Activated B cell treated with CpG ODN at 0.5 μM for 24 hours (primary cell): ENCODE measurements at regions of chr2 and their contacts with region 1.

Region 1: GRCh38 chr2:230160112-230160660 is 59.6 kb downstream of the SP110 start:
- DNase-seq: peak; percentile 34
- ATAC-seq: peak; percentile 42
- H3K4me3 Mint-ChIP-seq: no peak overlapping the region
- H3K27ac Mint-ChIP-seq: no peak overlapping the region
- H3K4me1 Mint-ChIP-seq: peaks cover 24% of the 10 kb centered on the region
- H3K27me3 Mint-ChIP-seq: no peaks in the 10 kb centered on the region
- CTCF ChIP-seq: no peak

Region 2: GRCh38 chr2:229780856-229781773 is 379.1 kb before region 1 on chr2:
- CTCF ChIA-PET with region 1: interaction called, 3 read pairs
- POLR2A ChIA-PET with region 1: no interaction called
- intact Hi-C with region 1: loop called (anchors 2 kb)
- DNase-seq: no peak
- ATAC-seq: peak; percentile 65
- H3K4me3 Mint-ChIP-seq: no peak overlapping the region
- H3K27ac Mint-ChIP-seq: no peak overlapping the region
- H3K4me1 Mint-ChIP-seq: peaks cover 21% of the 10 kb centered on the region
- H3K27me3 Mint-ChIP-seq: no peaks in the 10 kb centered on the region
- CTCF ChIP-seq: peak; percentile 90

Region 3: DNA sequence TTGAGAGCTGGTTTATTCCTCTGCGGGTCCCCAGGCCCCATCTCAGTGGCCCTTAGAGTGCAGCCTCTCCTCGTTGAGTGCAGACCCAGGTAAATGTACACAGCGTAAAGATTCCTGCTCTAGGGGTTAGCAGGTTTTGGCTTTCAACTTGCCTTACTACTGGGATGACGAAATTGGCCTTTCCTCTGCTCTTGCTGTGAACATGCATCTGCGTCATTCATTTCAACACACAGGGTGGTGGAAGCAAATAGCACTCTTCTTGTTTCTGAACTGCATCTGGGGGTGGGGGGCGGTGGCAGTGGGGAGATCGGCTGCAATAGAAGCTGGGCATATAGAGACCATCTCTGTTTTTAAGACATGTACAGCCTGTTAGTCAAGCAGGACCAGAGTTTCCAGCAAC is 75.0 kb before region 1 on chr2:
- CTCF ChIA-PET with region 1: no interaction called
- POLR2A ChIA-PET with region 1: no interaction called
- intact Hi-C with region 1: no loop called
- DNase-seq: no peak
- ATAC-seq: no peak
- H3K4me3 Mint-ChIP-seq: no peak overlapping the region
- H3K27ac Mint-ChIP-seq: no peak overlapping the region
- H3K4me1 Mint-ChIP-seq: no peaks in the 10 kb centered on the region
- H3K27me3 Mint-ChIP-seq: peaks cover 4% of the 10 kb centered on the region
- CTCF ChIP-seq: no peak

Region 4: DNA sequence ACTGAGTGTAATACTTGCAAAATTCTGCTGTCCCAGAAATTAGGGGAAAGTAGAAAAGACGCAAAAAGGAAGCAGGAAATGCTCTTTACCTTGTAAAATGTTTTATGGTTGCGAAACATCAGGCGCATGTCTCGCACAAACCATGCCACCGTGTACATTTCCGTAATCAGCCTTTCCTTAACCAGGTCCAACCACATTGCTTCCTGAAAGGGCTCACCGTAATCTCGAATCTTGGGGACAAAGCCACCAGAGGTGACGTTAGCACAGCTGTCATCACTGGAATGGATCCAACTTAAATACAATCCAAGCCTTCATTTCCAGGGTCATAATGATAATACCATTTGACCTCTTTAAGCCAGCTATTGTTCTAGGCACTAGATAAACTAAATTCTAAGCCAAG is 10.3 kb after region 1 on chr2:
- CTCF ChIA-PET with region 1: interaction called, 12 read pairs
- POLR2A ChIA-PET with region 1: interaction called, 4 read pairs
- intact Hi-C with region 1: no loop called
- DNase-seq: no peak
- ATAC-seq: no peak
- H3K4me3 Mint-ChIP-seq: no peak overlapping the region
- H3K27ac Mint-ChIP-seq: no peak overlapping the region
- H3K4me1 Mint-ChIP-seq: no peaks in the 10 kb centered on the region
- H3K27me3 Mint-ChIP-seq: no peaks in the 10 kb centered on the region
- CTCF ChIP-seq: no peak

Region 5: GRCh38 chr2:230411570-230412370 is 251.6 kb after region 1 on chr2:
- CTCF ChIA-PET with region 1: no interaction called
- POLR2A ChIA-PET with region 1: no interaction called
- intact Hi-C with region 1: no loop called
- DNase-seq: peak; percentile 61
- ATAC-seq: peak; percentile 67
- H3K4me3 Mint-ChIP-seq: peak overlapping the region; percentile 99
- H3K27ac Mint-ChIP-seq: peak overlapping the region; percentile 99
- H3K4me1 Mint-ChIP-seq: peaks cover 74% of the 10 kb centered on the region
- H3K27me3 Mint-ChIP-seq: no peaks in the 10 kb centered on the region
- CTCF ChIP-seq: no peak